GM12878 (cell line): ENCODE measurements at regions of chr9 and their contacts with region 1.

Region 1: DNA sequence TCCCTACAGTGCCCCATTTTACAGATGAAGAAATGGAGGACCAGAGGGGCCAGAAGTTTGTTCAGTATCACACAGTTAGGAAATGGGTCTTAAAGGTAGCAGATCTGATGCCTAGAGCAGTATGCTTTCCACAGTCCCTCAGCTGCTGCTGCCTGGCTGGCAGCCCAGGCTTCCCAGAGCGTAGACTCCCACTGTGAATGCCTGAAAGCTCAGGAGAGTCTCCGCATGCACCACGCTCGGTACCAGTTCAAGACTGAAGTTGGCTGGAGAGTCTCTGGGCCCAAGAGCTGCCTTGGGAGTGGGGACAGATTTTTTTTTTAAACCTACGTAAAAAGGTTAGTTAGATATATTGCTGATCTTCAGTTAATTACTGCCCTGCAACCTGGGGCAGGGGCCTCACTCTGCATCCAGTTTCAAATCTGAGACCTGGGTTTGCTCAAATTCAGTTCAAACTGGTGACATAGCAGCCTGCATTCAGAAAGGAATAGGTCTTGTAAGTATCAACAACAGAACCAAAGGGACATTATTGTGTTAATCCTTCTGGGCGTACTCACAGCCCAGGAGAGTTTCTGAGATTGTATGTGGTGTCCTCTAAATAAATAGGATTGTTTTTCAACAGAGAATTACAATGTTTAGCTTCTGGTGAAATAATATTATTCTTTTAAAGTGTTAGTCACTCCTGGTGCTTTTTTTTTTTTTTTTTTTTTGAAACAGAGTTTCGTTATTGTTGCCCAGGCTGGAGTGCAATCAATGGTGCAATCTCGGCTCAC is 8.3 kb downstream of the NANS start:
- DNase-seq: no peak
- ATAC-seq: no peak
- H3K4me3 ChIP-seq: no peak overlapping the region
- H3K27ac ChIP-seq: no peak overlapping the region
- H3K4me1 ChIP-seq: 0 out of 2 replicates have a peak, but pooled peaks cover 3% of the 10 kb centered on the region
- H3K27me3 ChIP-seq: no peaks in the 10 kb centered on the region
- CTCF ChIP-seq: no peak
- EP300 ChIP-seq: no peak
- POLR2A ChIP-seq: no peak
- RAD21 ChIP-seq: no peak

Region 2: DNA sequence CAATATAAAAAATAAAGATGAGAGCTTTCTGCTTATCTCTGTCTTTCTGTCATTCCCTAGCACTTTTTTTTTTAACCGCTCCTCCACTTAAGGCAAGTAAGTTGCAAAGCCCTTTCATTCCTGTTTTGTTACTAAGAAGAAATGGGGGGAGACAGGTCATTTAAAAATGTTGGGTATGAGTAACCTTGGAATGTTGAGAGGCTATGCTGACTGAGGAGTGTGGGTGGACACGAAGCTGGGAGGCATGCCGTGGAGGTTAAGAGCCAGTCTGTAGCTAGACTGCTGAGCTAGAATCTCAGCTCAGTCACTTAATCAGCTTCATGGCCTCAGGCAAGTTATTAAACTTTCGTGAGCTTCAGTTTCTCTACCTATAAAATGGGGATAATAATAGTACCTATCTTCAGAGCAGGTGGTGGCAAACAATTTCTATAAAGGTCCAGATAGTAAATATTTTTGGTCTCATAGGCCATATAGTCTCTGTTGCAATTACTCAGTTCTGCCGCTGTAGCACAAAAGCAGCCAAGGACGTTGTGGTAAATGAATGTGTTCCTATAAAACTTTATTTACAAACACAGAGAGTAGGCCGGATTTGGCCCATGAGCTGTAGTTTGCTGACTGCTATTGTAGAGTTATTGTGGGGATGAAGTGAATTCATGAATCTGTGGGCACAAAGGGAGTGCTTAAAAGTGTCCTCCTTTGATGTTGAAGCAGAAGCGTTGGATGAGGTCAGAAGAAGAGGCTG is 423.9 kb after region 1 on chr9:
- CTCF ChIA-PET with region 1: no interaction called
- POLR2A ChIA-PET with region 1: interaction called, 10 read pairs
- RAD21 ChIA-PET with region 1: no interaction called
- SMC1A ChIA-PET with region 1: no interaction called
- in situ Hi-C with region 1: no loop called
- intact Hi-C with region 1: no loop called
- DNase-seq: no peak
- ATAC-seq: no peak
- H3K4me3 ChIP-seq: no peak overlapping the region
- H3K27ac ChIP-seq: no peak overlapping the region
- H3K4me1 ChIP-seq: no peaks in the 10 kb centered on the region
- H3K27me3 ChIP-seq: 0 out of 4 replicates have a peak, but pooled peaks cover 0 to 1% of the 10 kb centered on the region in 2 experiments
- CTCF ChIP-seq: no peak
- EP300 ChIP-seq: no peak
- POLR2A ChIP-seq: no peak
- RAD21 ChIP-seq: no peak